Heart right ventricle (tissue), 16 donors: ENCODE measurements at regions of chr10 and their contacts with region 1.

Region 1: DNA sequence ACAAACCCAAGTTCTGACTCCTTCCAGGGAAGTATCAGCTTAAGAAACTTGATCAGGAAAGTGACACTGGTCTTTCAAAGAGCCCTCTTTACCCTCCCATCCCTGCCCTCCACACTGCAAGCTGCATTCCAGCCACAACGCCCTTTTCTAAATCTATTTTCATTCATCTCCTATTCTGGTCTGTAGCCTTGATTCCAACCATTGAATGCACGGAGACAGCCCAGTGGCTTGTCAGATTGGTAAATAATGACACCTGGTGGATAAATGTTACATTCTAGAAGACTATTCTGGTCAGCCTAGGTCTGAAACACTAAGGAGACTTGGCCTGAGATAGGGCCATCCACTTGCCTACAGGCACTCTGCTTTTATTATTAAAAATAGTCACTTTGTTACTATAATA is 20.9 kb downstream of the MORN4 start:
- DNase-seq: peak in 1 of 2 donors; percentile 22
- ATAC-seq: peak; percentile 63 to 82 (median 71)
- H3K4me3 ChIP-seq: no peak overlapping the region
- H3K27ac ChIP-seq: peak overlapping the region in 6 of 10 donors; percentile 35 to 90 (median 71)
- H3K4me1 ChIP-seq: peaks cover 0 to 38% (median 9%) of the 10 kb centered on the region in 9 donors
- H3K27me3 ChIP-seq: no peaks in the 10 kb centered on the region
- CTCF ChIP-seq: peak; percentile 24 to 71 (median 50)

Region 2: DNA sequence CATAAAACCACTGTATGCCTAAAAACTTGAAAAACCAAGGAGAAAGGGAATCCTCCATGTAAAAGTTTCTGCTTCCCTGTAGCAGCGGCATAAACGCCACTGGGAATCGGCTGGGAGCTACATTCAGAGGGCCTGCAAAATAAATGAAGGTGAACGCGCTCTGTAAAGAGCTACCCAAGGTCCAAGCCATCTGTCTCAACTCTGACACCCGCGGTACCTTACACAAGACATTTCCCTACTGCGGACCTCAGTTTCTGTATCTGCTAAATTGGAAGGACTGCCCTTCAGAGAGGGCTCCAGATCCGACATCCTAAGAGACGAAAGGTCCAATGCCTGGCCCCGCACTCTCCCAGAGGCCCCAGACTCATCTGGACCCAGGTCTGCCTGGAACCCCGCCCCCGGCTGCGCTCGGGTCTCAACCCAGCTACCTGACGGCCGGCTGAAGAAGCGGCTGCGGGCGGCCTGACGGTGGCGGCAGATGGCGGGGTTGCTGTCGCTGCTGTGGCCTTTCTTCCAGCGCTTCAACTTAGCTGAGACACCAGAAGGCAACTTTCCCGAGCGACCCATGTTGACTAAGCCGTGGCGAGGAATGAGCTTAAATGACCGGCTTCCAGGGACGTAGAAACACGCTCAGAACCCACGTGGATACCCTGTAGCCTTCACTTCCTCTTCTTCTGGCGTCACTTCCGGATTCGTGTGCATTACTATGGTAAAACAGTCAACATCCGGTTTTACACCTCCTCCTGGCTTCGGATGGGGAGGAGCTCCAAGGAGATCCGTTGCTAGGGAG is 211.5 kb before region 1 on chr10 and contains the start of gene RRP12:
- intact Hi-C with region 1: loop called in 6 of 10 experiments (anchors 2 to 10 kb)
- DNase-seq: peak; percentile 37 to 96
- ATAC-seq: peak; percentile 95 to 98 (median 97)
- H3K4me3 ChIP-seq: peak within 1 kb of the TSS; percentile 48 to 96 (median 80)
- H3K27ac ChIP-seq: peak within 1 kb of the TSS in 9 of 10 donors; percentile 56 to 91 (median 83)
- H3K4me1 ChIP-seq: peaks cover 0 to 30% (median 13%) of the 10 kb centered on the region in 9 donors
- H3K27me3 ChIP-seq: no peaks in the 10 kb centered on the region
- CTCF ChIP-seq: peak in 4 of 9 donors; percentile 8 to 36 (median 22)
- total RNA-seq, gene RRP12: 11.1 to 30.5 (median 20.8) TPM

Region 3: DNA sequence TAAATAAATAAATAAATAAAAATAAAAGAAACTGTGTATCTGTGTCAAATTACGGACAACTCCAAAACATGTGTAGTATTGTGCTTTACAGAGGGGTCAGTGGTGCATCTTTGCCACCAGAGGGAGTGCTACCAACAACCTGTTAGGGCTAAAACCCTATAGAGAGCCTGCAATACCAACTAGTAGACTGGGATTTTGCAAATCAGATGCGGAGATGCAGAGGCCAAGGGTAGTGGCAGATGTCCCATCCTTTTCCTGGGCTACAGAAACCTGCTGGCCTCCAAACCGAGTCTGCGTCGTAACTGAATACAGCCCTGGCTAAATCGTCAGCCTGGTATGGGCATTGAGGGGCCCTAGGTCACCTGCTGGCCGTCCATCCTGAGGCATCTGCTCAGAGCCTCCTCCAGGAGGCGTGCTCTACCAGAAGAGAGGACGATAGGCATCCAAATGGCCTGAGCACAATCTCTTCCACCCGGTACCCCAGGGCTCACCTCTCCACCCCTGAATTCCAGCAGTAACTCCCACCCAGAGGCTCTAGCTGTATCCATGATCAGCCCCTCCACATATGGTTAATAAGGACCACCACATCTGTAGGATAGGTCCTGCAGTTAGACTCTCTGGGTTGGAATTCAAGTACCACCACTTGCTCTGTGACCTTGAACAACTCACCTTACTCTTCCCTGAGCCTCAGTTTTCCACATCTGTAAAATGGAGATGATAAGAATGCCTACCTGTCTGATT is 205.0 kb before region 1 on chr10:
- intact Hi-C with region 1: loop called in 6 of 10 experiments (anchors 2 to 10 kb)
- DNase-seq: peak in 1 of 2 donors; percentile 54
- ATAC-seq: peak; percentile 85 to 93 (median 91)
- H3K4me3 ChIP-seq: peak overlapping the region in 1 of 10 donors; percentile 7
- H3K27ac ChIP-seq: peak overlapping the region in 2 of 10 donors; percentile 19 to 87
- H3K4me1 ChIP-seq: peaks cover 0 to 33% (median 8%) of the 10 kb centered on the region in 9 donors
- H3K27me3 ChIP-seq: no peaks in the 10 kb centered on the region
- CTCF ChIP-seq: peak; percentile 67 to 92 (median 85)

Region 4: GRCh38 chr10:97463363-97464132 is 148.8 kb before region 1 on chr10:
- intact Hi-C with region 1: loop called in 8 of 10 experiments (anchors 2 to 10 kb)
- DNase-seq: peak in 1 of 2 donors; percentile 44
- ATAC-seq: peak; percentile 51 to 69 (median 58)
- H3K4me3 ChIP-seq: no peak overlapping the region
- H3K27ac ChIP-seq: peak overlapping the region in 4 of 10 donors; percentile 1 to 33 (median 16)
- H3K4me1 ChIP-seq: peaks cover 0 to 16% (median 4%) of the 10 kb centered on the region in 9 donors
- H3K27me3 ChIP-seq: no peaks in the 10 kb centered on the region
- CTCF ChIP-seq: peak; percentile 60 to 89 (median 85)

Region 5: DNA sequence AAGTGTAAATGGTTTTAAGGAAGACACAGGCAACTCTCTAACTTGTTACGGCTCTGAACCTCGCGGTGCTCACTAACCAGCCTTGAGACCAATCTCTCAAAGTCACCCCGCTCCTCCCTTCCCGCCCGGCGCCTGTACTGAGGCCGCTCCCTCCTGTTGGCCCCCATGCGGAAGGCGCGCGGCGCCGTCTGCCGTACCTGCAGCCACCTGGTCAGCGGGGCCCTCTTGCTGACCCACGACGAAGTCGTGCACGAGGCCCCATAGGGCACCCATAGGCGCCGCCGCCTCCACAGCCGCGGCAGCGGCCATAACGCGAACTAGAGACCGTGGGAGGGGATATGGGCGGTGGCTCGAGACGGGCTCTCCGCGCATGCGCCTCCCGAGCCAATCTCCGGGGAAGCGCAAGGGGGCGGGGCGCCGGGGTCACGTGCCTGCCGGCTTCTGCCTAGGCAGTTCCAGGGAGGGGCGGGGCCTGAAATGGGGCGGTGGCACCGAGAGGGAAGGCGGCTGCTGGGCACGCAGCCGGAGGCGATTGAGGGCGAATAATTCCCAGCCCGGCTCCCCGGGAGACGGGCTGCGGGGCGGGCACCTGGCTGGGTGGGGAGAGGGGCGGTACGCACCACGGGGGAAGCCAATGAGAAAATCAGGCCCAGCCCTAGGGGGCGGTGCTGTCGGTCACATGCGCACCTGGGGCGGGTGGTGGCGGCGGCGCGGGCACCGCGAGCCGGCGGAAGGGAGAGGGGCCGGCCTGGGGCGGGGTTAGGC is 114.1 kb before region 1 on chr10 and contains the start of gene MMS19:
- intact Hi-C with region 1: loop called in 1 of 10 experiments (anchors 10 kb)
- DNase-seq: peak; percentile 99 to 100
- ATAC-seq: peak; percentile 92 to 97 (median 94)
- H3K4me3 ChIP-seq: peak within 1 kb of the TSS; percentile 77 to 100 (median 94)
- H3K27ac ChIP-seq: peak within 1 kb of the TSS; percentile 74 to 97 (median 94)
- H3K4me1 ChIP-seq: peaks cover 9 to 79% (median 58%) of the 10 kb centered on the region in 9 donors
- H3K27me3 ChIP-seq: no peaks in the 10 kb centered on the region
- CTCF ChIP-seq: peak in 6 of 9 donors; percentile 12 to 43 (median 28)
- total RNA-seq, gene MMS19: 34.7 to 49.1 (median 43.8) TPM

Region 6: DNA sequence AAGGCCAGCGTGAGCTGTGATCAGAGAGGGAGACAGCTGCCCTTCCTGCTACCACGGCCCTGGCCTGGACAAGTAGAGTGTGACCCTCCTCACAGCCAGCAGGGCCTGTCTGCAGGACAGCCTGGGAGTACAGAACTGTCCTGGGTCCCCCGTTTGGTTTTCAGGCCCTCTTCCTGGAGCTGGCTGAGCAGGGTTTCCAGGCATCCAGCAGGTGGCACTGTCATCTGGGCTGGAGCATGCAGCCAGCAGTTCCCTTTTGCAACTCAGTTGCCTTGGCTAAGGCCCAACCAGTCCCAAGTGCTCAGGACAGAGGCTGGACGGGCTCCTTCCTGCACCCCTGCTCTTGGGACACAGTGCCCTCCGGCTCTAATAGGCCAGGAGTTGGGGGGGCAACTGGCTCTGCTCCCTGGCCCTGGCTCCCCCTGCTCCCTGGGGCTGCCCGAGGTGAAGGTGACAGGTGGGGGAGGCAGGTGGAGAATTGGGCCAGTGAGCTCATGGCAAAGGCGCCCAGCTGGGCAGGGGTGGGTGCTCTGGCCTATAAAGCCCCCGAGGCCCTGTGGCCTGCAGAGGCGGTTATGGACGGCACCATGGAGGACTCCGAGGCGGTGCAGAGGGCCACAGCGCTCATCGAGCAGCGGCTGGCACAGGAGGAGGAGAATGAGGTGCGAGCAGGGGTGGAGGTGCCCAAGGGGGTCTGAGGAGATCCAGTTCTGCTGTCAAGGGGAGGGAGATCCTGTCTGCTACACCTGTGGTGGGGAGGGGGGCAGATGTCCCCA is 40.0 kb before region 1 on chr10 and contains the start of gene ANKRD2:
- intact Hi-C with region 1: loop called in 9 of 10 experiments (anchors 1 to 5 kb)
- DNase-seq: peak; percentile 76 to 84
- ATAC-seq: peak; percentile 64 to 85 (median 74)
- H3K4me3 ChIP-seq: peak within 1 kb of the TSS in 5 of 10 donors; percentile 2 to 26 (median 16)
- H3K27ac ChIP-seq: peak within 1 kb of the TSS; percentile 65 to 95 (median 80)
- H3K4me1 ChIP-seq: peaks cover 4 to 57% (median 35%) of the 10 kb centered on the region in 9 donors
- H3K27me3 ChIP-seq: no peaks in the 10 kb centered on the region
- CTCF ChIP-seq: peak; percentile 52 to 87 (median 82)
- total RNA-seq, gene ANKRD2: 46.3 to 395 (median 133) TPM

Region 7: GRCh38 chr10:97584798-97585437 is 27.5 kb before region 1 on chr10:
- intact Hi-C with region 1: loop called in 1 of 10 experiments (anchors 1 kb)
- DNase-seq: no peak
- ATAC-seq: peak in 5 of 8 donors; percentile 32 to 73 (median 59)
- H3K4me3 ChIP-seq: no peak overlapping the region
- H3K27ac ChIP-seq: peak overlapping the region; percentile 38 to 91 (median 85)
- H3K4me1 ChIP-seq: peaks cover 0 to 36% (median 9%) of the 10 kb centered on the region in 9 donors
- H3K27me3 ChIP-seq: no peaks in the 10 kb centered on the region
- CTCF ChIP-seq: no peak

Region 8: GRCh38 chr10:97838091-97838490 is 225.7 kb after region 1 on chr10:
- intact Hi-C with region 1: no loop called
- DNase-seq: no peak
- ATAC-seq: no peak
- H3K4me3 ChIP-seq: no peak overlapping the region
- H3K27ac ChIP-seq: no peak overlapping the region
- H3K4me1 ChIP-seq: peaks cover 0 to 14% (median 9%) of the 10 kb centered on the region in 9 donors
- H3K27me3 ChIP-seq: peaks cover 0 to 9% (median 0%) of the 10 kb centered on the region in 7 donors
- CTCF ChIP-seq: no peak